ENCODE measurements at regions of chr7 and their contacts with region 1.

Region 1: DNA sequence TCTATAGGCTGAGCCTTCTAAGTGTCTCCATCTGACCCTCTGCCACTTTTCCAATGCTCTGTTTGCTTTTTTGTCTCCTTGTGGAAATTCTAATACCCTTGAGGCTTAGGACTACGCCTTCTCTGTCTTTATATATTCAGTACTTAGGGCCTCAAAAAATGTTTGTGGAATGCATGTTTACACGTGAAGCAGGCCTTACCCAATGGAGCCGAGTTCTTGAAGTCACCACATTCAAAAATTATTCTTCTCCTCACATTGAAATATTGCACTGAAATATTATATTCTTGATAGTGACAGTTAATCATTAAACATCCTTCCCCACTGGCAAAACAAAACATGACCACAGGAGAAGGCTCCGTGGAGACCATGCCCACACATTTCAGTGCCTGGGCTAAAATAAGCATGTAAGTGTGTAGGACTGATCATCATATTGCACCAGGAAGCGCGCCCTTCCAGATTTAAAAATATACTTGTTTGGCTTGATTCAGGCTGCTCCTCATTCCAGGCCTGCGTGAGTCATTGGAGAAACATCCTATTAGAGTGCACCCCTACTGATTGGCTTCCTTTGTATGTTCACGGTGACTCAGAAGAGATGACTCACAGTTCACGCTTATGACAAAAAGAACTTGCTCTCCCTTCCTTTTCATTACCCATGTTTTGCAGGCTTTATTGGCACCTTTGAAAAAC is 307.4 kb upstream of the AOAH start:
- DNase-seq: peak; percentile 100
- H3K4me3 ChIP-seq: no peak overlapping the region
- H3K27ac ChIP-seq: peak overlapping the region; percentile 77
- H3K4me1 ChIP-seq: peaks cover 32% of the 10 kb centered on the region
- H3K27me3 ChIP-seq: no peaks in the 10 kb centered on the region
- CTCF ChIP-seq: no peak
- POLR2A ChIP-seq: peak; percentile 35

Region 2: GRCh38 chr7:36736899-36737211 is 294.9 kb before region 1 on chr7:
- CTCF ChIA-PET with region 1: no interaction called
- POLR2A ChIA-PET with region 1: no interaction called
- dilution Hi-C with region 1: no loop called
- intact Hi-C with region 1: no loop called
- DNase-seq: no peak
- H3K4me3 ChIP-seq: no peak overlapping the region
- H3K27ac ChIP-seq: no peak overlapping the region
- H3K4me1 ChIP-seq: no peaks in the 10 kb centered on the region
- H3K27me3 ChIP-seq: no peaks in the 10 kb centered on the region
- CTCF ChIP-seq: no peak
- POLR2A ChIP-seq: no peak

Region 3: GRCh38 chr7:37050801-37051200 is 19.1 kb after region 1 on chr7:
- CTCF ChIA-PET with region 1: no interaction called
- POLR2A ChIA-PET with region 1: no interaction called
- dilution Hi-C with region 1: no loop called
- intact Hi-C with region 1: loop called (anchors 1 kb)
- DNase-seq: peak; percentile 61
- H3K4me3 ChIP-seq: no peak overlapping the region
- H3K27ac ChIP-seq: no peak overlapping the region
- H3K4me1 ChIP-seq: peaks cover 11% of the 10 kb centered on the region
- H3K27me3 ChIP-seq: no peaks in the 10 kb centered on the region
- CTCF ChIP-seq: no peak
- POLR2A ChIP-seq: no peak

Measured in endothelial cell of umbilical vein (primary cell).